Activated B cell treated with CpG ODN at 0.5 μM for 24 hours (primary cell): ENCODE measurements at regions of chr11 and their contacts with region 1.

Region 1: GRCh38 chr11:31487848-31488247 is 21.6 kb downstream of the IMMP1L start:
- DNase-seq: no peak
- ATAC-seq: no peak
- H3K4me3 Mint-ChIP-seq: no peak overlapping the region
- H3K27ac Mint-ChIP-seq: no peak overlapping the region
- H3K4me1 Mint-ChIP-seq: peaks cover 5% of the 10 kb centered on the region
- H3K27me3 Mint-ChIP-seq: no peaks in the 10 kb centered on the region
- CTCF ChIP-seq: no peak

Region 2: DNA sequence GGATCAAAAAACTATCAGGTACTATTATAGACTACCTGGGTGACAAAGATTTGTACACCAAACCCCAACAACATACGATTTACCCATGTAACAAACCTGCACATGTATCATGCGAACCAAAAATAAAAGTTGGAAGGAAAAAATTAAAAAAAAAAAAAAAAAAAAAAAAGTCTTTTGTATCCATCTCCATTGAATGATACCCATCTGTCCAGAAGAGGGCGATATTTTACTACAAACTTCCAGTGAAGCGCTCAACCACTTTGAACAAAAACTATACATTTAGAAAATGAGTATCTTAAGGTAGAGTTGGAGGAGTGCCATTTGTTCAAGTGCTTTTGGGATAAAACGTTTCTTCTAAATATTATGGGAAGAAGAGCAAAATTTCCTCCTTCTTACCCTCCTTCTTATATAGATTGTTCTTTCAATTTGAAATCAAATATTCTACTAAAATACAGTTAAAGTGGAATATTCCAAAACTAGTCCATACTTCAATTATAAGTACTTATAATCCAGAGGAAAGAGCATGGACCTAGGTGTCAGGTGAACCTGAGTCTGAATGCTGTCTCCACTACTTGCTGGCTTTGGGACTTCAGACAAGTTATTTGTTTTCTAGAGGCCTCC is 1141.7 kb before region 1 on chr11:
- CTCF ChIA-PET with region 1: no interaction called
- POLR2A ChIA-PET with region 1: no interaction called
- intact Hi-C with region 1: no loop called
- DNase-seq: no peak
- ATAC-seq: no peak
- H3K4me3 Mint-ChIP-seq: no peak overlapping the region
- H3K27ac Mint-ChIP-seq: no peak overlapping the region
- H3K4me1 Mint-ChIP-seq: peaks cover 38% of the 10 kb centered on the region
- H3K27me3 Mint-ChIP-seq: no peaks in the 10 kb centered on the region
- CTCF ChIP-seq: peak; percentile 50

Region 3: DNA sequence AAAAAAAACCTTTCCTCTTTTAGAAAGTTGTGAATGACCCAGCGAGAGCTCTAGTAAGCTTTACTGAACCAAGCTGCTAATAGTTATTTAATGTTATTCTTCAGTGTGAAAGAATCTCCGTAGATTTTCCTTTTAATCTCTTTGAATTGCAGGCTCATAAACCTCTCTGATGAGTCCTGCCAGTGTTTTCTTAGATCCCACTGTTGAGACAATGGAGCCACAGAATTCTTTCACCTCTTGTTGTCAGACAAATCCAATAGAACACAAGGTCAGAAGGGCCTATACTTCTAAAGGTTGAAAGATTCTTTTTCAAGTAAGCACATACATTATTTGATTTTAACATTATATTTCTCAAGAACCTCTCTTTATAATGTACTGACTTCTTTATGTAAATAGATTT is 66.0 kb before region 1 on chr11:
- CTCF ChIA-PET with region 1: no interaction called
- POLR2A ChIA-PET with region 1: no interaction called
- intact Hi-C with region 1: no loop called
- DNase-seq: no peak
- ATAC-seq: no peak
- H3K4me3 Mint-ChIP-seq: no peak overlapping the region
- H3K27ac Mint-ChIP-seq: no peak overlapping the region
- H3K4me1 Mint-ChIP-seq: no peaks in the 10 kb centered on the region
- H3K27me3 Mint-ChIP-seq: no peaks in the 10 kb centered on the region
- CTCF ChIP-seq: no peak

Region 4: GRCh38 chr11:32006799-32007388 is 519.0 kb after region 1 on chr11:
- CTCF ChIA-PET with region 1: no interaction called
- POLR2A ChIA-PET with region 1: no interaction called
- intact Hi-C with region 1: loop called (anchors 2 kb)
- DNase-seq: no peak
- ATAC-seq: peak; percentile 64
- H3K4me3 Mint-ChIP-seq: no peak overlapping the region
- H3K27ac Mint-ChIP-seq: no peak overlapping the region
- H3K4me1 Mint-ChIP-seq: no peaks in the 10 kb centered on the region
- H3K27me3 Mint-ChIP-seq: peaks cover 24% of the 10 kb centered on the region
- CTCF ChIP-seq: no peak